Activated naive CD4-positive, alpha-beta T cell treated with anti-CD3 and anti-CD28 coated beads for 36 hours (primary cell): ENCODE measurements at regions of chr19 and their contacts with region 1.

Region 1: GRCh38 chr19:36973021-36973843 is 57.1 kb downstream of the ZNF568 start:
- DNase-seq: peak; percentile 91
- H3K4me3 Mint-ChIP-seq: peak overlapping the region; percentile 92
- H3K27ac Mint-ChIP-seq: peak overlapping the region; percentile 95
- H3K4me1 Mint-ChIP-seq: peaks cover 11% of the 10 kb centered on the region
- H3K27me3 Mint-ChIP-seq: no peaks in the 10 kb centered on the region

Region 2: GRCh38 chr19:36962346-36962745 is 10.9 kb before region 1 on chr19:
- CTCF ChIA-PET with region 1: no interaction called
- intact Hi-C with region 1: no loop called
- DNase-seq: no peak
- H3K4me3 Mint-ChIP-seq: no peak overlapping the region
- H3K27ac Mint-ChIP-seq: no peak overlapping the region
- H3K4me1 Mint-ChIP-seq: no peaks in the 10 kb centered on the region
- H3K27me3 Mint-ChIP-seq: no peaks in the 10 kb centered on the region

Region 3: GRCh38 chr19:37551129-37551993 is 578.1 kb after region 1 on chr19:
- CTCF ChIA-PET with region 1: no interaction called
- intact Hi-C with region 1: loop called (anchors 5 kb)
- DNase-seq: peak; percentile 58
- H3K4me3 Mint-ChIP-seq: peak overlapping the region; percentile 76
- H3K27ac Mint-ChIP-seq: no peak overlapping the region
- H3K4me1 Mint-ChIP-seq: peaks cover 6% of the 10 kb centered on the region
- H3K27me3 Mint-ChIP-seq: peaks cover 2% of the 10 kb centered on the region